Prostate gland (tissue), 2 donors: ENCODE measurements at regions of chr6 and their contacts with region 1.

Region 1: DNA sequence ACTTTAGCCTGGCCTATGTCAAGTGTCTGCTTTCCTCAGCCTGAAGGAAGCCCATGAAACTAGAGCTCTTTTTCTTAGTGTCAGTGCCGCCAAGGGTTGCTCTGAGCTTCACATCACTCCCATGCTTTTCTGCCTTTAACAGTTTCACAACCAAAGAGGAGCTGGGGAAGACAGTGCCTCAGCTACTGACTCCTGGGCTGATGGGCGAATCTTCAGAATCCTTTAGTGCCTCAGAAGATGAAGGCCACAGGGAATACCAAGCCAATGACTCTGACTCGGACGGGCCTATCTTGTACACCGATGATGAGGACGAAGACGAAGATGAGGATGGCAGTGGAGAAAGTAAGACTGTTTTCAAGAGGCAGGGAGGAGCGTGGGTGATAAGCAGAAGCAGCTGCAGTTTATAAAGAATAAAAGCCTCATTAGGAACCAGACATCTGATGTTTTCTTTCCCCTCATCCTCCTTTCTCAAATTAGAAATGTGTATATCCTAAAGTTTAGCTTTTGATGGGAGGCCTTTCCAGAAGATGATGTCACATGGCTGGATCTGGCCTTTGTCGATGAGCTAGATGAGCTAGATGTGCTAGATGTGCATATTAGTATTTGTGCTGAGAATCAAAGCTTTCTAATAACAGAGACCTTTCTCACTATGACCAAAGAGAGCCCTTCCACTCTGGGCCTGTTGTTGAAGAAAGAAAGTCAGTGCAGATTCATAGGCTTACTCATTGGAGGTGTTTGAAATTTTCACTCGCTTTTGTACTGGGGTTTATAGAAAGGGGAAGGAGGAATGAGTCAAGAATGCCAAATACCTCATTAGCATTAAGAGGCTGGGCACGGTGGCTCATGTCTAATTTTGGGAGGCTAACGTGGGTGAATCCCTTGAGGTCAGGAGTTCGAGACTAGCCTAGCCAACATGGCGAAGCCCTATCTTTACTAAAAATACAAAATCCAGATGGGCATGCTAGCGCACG is 70.7 kb upstream of the LTV1 start:
- DNase-seq: no peak
- H3K4me3 ChIP-seq: no peak overlapping the region
- H3K27ac ChIP-seq: peak overlapping the region in 1 of 2 donors; percentile 32
- H3K4me1 ChIP-seq: no peaks in the 10 kb centered on the region
- H3K27me3 ChIP-seq: no peaks in the 10 kb centered on the region
- CTCF ChIP-seq: no peak
- POLR2A ChIP-seq: no peak

Region 2: DNA sequence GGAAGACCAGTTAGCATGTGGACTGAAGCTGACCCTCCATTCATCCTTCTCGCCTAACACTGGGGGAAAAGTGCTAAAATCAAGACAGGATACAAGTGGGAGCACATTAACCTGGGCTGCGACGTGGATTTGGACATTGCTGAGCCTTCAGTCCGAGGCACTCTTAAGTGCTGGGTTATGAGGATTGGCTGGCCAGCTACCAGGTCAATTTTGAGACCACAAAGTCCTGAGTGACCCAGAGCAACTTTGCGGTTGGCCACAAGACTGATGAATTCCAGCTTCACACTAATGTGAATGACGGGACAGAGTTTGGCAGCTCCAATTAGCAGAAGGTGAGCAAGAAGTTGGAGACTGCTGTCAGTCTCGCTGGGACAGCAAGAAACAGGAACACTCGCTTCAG is 281.6 kb before region 1 on chr6:
- intact Hi-C with region 1: no loop called
- DNase-seq: no peak
- H3K4me3 ChIP-seq: no peak overlapping the region
- H3K27ac ChIP-seq: no peak overlapping the region
- H3K4me1 ChIP-seq: no peaks in the 10 kb centered on the region
- H3K27me3 ChIP-seq: no peaks in the 10 kb centered on the region
- CTCF ChIP-seq: no peak
- POLR2A ChIP-seq: no peak

Region 3: GRCh38 chr6:143689848-143690247 is 82.6 kb before region 1 on chr6:
- intact Hi-C with region 1: loop called (anchors 5 kb)
- DNase-seq: no peak
- H3K4me3 ChIP-seq: no peak overlapping the region
- H3K27ac ChIP-seq: no peak overlapping the region
- H3K4me1 ChIP-seq: no peaks in the 10 kb centered on the region
- H3K27me3 ChIP-seq: no peaks in the 10 kb centered on the region
- CTCF ChIP-seq: no peak
- POLR2A ChIP-seq: no peak

Region 4: DNA sequence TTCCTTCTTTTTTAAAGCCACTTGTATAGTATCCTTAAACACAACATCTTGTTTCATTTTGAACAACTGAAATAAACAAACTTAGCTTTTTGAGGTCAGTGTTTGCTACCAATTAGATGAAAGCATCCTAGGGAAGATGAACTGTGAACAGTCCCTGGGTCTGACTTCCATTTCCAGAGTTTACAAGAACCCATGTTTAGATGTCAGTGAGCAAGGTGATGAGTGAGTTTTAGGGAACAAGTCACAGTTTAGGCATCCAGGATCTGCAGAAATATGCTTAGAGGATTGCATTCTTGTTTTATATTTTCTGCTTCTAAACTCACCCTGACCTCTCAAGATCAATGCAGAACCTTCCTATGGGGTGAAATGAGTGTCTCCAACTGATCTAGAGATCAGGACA is 94.8 kb after region 1 on chr6:
- intact Hi-C with region 1: no loop called
- DNase-seq: no peak
- H3K4me3 ChIP-seq: no peak overlapping the region
- H3K27ac ChIP-seq: no peak overlapping the region
- H3K4me1 ChIP-seq: no peaks in the 10 kb centered on the region
- H3K27me3 ChIP-seq: no peaks in the 10 kb centered on the region
- CTCF ChIP-seq: no peak
- POLR2A ChIP-seq: no peak